ENCODE measurements at regions of chr5 and their contacts with region 1.

Region 1: DNA sequence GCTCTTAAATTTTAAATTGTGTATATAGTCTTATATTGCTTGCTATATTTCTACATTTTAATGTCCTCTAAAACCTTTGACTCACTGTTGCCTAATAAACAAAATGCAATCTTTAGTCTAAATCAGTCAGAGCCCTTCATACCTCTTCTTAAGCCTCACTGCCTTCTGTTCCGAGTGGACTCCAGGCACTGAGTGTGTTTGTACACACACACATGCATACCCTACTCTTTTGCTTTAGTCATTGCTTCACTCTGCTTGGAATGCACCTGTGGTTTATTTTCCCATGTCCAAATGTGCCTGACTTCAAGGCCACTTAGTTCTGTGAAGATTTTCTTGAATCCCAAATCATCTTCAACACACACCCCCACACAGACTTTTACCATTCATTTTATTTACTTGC is 60.9 kb downstream of the SLC12A2 start:
- DNase-seq: no peak
- ATAC-seq: no peak
- H3K4me3 ChIP-seq: no peak overlapping the region
- H3K27ac ChIP-seq: peak overlapping the region in 2 of 4 donors; percentile 25 to 29
- H3K4me1 ChIP-seq: peaks cover 4% of the 10 kb centered on the region in 2 donors
- H3K27me3 ChIP-seq: no peaks in the 10 kb centered on the region
- CTCF ChIP-seq: no peak
- POLR2A ChIP-seq: no peak

Region 2: GRCh38 chr5:126508962-126509279 is 1635.6 kb before region 1 on chr5:
- in situ Hi-C with region 1: no loop called
- intact Hi-C with region 1: no loop called
- DNase-seq: peak; percentile 37 to 62
- ATAC-seq: peak; percentile 86 to 93
- H3K4me3 ChIP-seq: no peak overlapping the region
- H3K27ac ChIP-seq: peak overlapping the region; percentile 58 to 81 (median 74)
- H3K4me1 ChIP-seq: peaks cover 3 to 14% of the 10 kb centered on the region in 2 donors
- H3K27me3 ChIP-seq: no peaks in the 10 kb centered on the region
- CTCF ChIP-seq: no peak
- POLR2A ChIP-seq: peak in 1 of 2 donors; percentile 24

Region 3: GRCh38 chr5:127833999-127834953 is 310.2 kb before region 1 on chr5:
- in situ Hi-C with region 1: no loop called
- intact Hi-C with region 1: no loop called
- DNase-seq: no peak
- ATAC-seq: no peak
- H3K4me3 ChIP-seq: no peak overlapping the region
- H3K27ac ChIP-seq: no peak overlapping the region
- H3K4me1 ChIP-seq: peaks cover 14 to 29% of the 10 kb centered on the region in 2 donors
- H3K27me3 ChIP-seq: no peaks in the 10 kb centered on the region
- CTCF ChIP-seq: no peak
- POLR2A ChIP-seq: no peak

Region 4: DNA sequence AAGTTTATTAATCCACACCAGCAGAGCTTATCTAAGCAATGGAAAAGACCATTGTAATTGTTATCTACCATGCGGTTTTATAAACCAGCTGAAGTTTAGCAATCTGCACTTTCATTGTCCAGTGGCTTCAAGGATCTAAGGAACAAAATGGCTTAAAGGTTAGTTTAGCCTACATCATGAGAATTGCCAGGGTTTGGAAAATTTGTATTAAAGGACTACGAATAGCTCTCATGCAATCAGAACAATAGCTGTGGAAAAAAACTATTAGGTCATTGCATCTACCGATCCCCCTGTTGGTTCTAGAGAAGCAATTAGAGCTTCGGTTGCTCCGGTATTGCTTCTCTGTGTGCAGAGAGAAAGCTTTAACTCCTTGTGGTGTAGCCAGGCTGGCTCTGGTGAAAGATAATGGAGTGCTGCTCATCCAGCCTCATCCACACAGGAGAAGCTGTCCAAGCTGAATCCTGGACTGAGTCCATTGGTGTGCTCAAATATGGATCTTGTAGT is 147.2 kb before region 1 on chr5:
- in situ Hi-C with region 1: no loop called
- intact Hi-C with region 1: no loop called
- DNase-seq: no peak
- ATAC-seq: no peak
- H3K4me3 ChIP-seq: no peak overlapping the region
- H3K27ac ChIP-seq: no peak overlapping the region
- H3K4me1 ChIP-seq: no peaks in the 10 kb centered on the region
- H3K27me3 ChIP-seq: no peaks in the 10 kb centered on the region
- CTCF ChIP-seq: no peak
- POLR2A ChIP-seq: no peak

Region 5: GRCh38 chr5:128109138-128109537 is 35.4 kb before region 1 on chr5:
- in situ Hi-C with region 1: no loop called
- intact Hi-C with region 1: loop called (anchors 5 kb)
- DNase-seq: no peak
- ATAC-seq: no peak
- H3K4me3 ChIP-seq: no peak overlapping the region
- H3K27ac ChIP-seq: no peak overlapping the region
- H3K4me1 ChIP-seq: peaks cover 10 to 14% of the 10 kb centered on the region in 2 donors
- H3K27me3 ChIP-seq: no peaks in the 10 kb centered on the region
- CTCF ChIP-seq: no peak
- POLR2A ChIP-seq: no peak